ENCODE measurements at regions of chr20 and their contacts with region 1.

Region 1: GRCh38 chr20:17617551-17618223 is 47.8 kb downstream of the DSTN start:
- DNase-seq: peak; percentile 82
- ATAC-seq: peak; percentile 84
- H3K4me3 Mint-ChIP-seq: no peak overlapping the region
- H3K27ac Mint-ChIP-seq: peak overlapping the region; percentile 15; the same call in 1 of the 2 replicates
- H3K4me1 Mint-ChIP-seq: no peaks in the 10 kb centered on the region
- H3K27me3 Mint-ChIP-seq: no peaks in the 10 kb centered on the region
- CTCF ChIP-seq: peak; percentile 62

Region 2: GRCh38 chr20:17456279-17456678 is 161.4 kb before region 1 on chr20:
- CTCF ChIA-PET with region 1: no interaction called
- POLR2A ChIA-PET with region 1: no interaction called
- DNase-seq: no peak
- ATAC-seq: no peak
- H3K4me3 Mint-ChIP-seq: no peak overlapping the region
- H3K27ac Mint-ChIP-seq: no peak overlapping the region
- H3K4me1 Mint-ChIP-seq: no peaks in the 10 kb centered on the region
- H3K27me3 Mint-ChIP-seq: no peaks in the 10 kb centered on the region
- CTCF ChIP-seq: no peak

Region 3: DNA sequence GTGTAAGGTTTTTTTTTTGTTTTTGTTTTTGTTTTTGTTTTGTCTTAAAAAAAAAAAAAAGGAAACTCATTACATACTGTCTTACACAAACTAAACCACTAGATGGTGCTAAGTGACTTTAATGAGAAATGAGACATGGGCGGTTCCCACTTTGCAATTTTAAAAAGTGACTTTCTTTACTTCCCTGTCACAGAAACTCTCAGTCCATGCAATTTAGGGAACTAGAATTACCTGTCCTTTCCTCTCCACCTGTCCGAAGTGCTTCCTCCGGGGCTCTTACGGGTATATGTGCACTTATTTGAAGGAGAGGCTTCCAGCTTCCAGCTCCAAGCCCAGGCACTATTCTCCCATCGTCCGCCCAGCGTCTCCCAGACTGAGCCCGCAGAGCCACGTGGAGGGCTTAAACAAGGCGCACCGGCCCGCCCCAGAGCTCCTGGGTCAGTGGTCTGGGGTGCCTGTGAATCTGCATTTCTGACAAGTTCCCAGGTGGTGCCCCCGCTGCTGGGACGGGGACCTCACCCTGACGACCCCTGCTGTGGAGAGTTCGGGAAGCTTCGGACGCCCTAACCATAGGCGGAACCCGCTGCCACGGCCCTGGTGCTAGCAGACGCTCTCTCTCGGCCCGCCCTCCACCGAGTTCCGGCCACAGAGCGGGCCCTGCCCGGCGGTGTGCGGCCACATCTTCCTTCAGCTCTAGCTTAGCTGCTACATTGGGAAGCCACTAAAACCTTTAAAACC is 112.6 kb before region 1 on chr20:
- CTCF ChIA-PET with region 1: interaction called, 42 read pairs
- POLR2A ChIA-PET with region 1: no interaction called
- DNase-seq: peak; percentile 58
- ATAC-seq: peak; percentile 83
- H3K4me3 Mint-ChIP-seq: peak overlapping the region; percentile 72
- H3K27ac Mint-ChIP-seq: no peak overlapping the region; the same call in 1 of the 2 replicates
- H3K4me1 Mint-ChIP-seq: peaks cover 16% of the 10 kb centered on the region
- H3K27me3 Mint-ChIP-seq: peaks cover 10% of the 10 kb centered on the region
- CTCF ChIP-seq: peak; percentile 29; the same call in 1 of the 2 replicates

Region 4: DNA sequence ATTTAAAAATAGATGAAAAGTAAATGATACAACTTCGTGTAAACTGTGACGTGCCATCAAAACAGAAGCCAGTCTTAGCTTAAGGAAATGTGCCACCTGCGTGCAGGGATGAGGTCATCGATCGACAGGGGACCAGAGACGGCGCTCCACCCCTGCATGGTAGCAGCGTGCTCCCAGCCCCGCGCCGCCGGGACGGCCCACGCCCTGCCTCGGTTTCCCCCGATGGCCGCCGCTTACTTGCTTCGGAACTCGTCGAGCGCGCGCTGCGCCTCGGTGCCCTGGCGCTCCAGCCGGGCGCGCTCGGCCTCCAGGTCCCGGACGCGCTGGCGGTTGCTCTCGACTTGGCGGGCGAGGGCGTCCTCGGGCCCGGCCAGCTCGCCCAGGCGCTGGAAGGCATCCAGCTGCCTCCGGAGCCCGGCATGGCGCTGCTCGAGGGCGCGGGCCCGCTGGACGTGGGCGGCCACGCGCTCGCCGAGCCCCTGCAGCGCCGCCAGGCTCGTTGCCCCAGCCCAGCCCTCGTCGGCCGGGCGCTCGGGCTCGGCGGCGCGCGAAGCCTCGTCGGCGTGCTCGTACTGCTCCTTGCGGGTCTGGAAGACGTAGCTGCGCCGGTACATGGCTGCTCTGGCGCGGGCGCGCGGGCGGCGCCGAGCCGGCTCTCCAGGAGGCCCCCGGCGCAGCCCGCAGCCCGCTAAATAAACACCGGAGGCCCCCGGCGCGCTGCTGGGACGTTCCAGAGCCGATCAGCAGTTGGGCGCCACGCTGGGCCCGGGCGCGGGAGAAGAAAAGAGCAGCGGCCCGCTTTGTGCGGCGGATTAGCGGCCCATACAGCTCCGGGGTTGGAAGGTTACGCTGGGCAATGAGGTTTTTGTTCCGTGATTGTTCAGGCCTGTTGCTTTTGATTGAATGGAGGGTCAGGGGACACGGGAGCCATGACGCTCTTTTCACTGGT is 86.7 kb before region 1 on chr20 and contains the start of gene BFSP1:
- CTCF ChIA-PET with region 1: interaction called, 23 read pairs
- POLR2A ChIA-PET with region 1: no interaction called
- DNase-seq: peak; percentile 74
- ATAC-seq: peak; percentile 69
- H3K4me3 Mint-ChIP-seq: peak within 1 kb of the TSS; percentile 82
- H3K27ac Mint-ChIP-seq: peak within 1 kb of the TSS; percentile 85; the same call in 1 of the 2 replicates
- H3K4me1 Mint-ChIP-seq: peaks cover 26% of the 10 kb centered on the region
- H3K27me3 Mint-ChIP-seq: peaks cover 22% of the 10 kb centered on the region
- CTCF ChIP-seq: no peak
- total RNA-seq, gene BFSP1: 1.9 to 3.0 TPM (median 2.7 TPM) in 3 replicates

Region 5: DNA sequence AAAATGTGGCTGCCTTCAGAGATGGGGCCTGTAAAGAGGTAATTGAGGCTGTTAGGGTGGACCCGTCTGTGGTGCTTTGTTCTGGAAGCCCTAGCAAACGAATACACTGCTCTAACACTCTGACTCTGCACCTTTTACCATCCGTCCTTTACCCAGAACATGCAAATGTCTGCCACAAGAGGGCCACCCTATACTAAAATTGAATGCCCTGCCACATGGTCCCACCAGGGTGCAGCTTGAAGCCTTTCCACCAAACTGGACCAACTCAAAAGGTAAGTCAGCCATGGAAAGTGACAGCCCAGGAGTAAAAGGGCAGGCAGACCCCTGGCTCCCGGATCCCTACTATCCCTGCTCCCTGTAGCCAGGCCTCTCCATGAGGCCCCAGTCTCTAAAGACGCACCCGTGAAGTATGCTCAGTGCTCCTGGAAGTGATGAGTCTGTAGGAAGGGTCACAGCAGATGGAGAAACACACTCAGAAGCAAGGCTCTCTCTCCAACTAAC is 80.7 kb before region 1 on chr20:
- CTCF ChIA-PET with region 1: interaction called, 23 read pairs
- POLR2A ChIA-PET with region 1: no interaction called
- DNase-seq: peak; percentile 77
- ATAC-seq: peak; percentile 94
- H3K4me3 Mint-ChIP-seq: no peak overlapping the region
- H3K27ac Mint-ChIP-seq: no peak overlapping the region
- H3K4me1 Mint-ChIP-seq: peaks cover 21% of the 10 kb centered on the region
- H3K27me3 Mint-ChIP-seq: peaks cover 1% of the 10 kb centered on the region
- CTCF ChIP-seq: peak; percentile 59; the same call in 1 of the 2 replicates